ENCODE measurements at regions of chr6 and their contacts with region 1.

Region 1: DNA sequence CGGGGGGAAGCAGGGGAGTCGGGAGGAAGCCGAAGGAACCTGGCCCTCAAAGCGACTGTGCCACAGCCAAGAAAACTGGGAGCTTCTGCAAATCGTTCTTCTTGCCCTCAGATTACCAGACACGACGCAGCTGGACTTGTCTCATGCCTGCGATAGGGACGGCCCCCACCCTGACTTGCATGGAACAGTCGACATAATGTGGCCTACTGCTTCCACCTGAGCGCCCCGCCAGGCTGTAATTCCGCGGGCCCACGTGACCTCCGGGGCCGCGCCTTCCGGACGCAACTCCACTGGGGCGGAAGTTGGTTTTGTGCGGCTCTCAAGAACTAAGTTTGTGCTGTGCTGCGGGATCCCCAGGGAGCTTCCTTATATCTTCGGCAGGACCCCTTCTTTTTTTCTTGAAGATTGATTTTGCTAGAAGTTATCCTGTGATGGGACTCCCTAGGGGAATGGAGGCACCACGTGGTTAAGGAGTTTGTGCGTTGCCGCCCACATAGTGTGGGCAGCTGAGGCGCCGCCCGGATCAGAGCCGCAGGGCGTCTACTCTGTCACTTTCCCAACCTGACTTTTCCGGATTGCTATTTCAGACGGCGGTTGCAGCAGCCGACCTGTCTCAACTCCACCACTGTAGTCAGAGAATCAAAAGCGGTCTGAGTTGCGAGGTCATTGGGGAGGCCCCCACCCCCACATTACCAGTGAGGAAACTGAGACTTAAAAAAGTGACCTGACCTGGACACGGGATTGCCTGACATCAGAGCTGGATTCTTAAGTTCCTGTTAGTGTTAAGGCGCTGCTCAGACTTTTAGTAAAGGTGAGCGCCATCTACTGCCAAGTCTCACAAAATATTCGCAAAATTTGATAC is 540 bp upstream of the CD164 start:
- DNase-seq: peak; percentile 94
- H3K4me3 Mint-ChIP-seq: peak overlapping the region; percentile 88
- H3K27ac Mint-ChIP-seq: peak overlapping the region; percentile 100
- H3K4me1 Mint-ChIP-seq: peaks cover 34% of the 10 kb centered on the region
- H3K27me3 Mint-ChIP-seq: no peaks in the 10 kb centered on the region
- CTCF ChIP-seq: peak; percentile 31

Region 2: DNA sequence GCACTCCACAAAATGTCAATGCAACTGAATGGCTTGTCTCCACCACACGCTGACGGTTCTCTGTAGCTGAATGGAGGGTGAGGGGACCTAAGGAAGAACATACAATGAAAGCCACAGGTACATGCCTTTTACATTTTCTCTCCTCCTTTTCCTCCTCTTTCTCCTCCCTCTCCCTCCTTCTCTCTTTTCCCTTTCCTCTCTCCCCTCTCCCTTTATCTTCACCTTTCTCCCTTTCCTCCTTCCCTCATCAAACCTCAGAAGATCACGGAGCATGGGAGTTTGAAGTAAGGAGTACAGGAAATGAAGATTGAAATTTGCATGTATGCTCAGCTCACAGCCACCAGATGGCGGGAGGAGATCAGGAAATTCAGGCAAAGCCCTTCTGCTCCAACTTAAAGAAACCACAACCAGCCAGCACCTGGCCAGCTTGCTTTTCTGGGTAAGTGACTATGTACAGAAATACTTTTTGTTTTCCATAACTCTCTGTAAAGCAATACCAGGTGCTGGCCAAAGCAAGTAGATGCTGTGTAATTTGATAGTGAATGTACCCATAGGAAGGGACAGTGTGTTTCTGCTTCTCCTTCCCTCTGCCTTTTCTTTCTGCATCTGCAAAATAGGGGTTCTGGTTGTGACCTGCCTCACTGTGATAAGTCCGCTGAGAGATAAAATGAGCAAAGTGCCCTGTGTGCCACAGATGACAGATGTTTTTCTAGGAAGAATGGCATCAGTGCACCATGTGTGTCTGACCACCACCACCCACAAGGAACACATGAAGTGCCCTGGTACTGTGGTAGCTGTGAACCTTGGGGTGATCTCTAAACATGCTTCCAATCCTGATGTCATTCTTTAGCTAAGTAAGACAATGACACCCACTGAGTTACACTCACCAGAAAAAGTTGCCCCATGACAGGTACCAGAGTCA is 840.7 kb before region 1 on chr6:
- CTCF ChIA-PET with region 1: interaction called, 4 read pairs
- POLR2A ChIA-PET with region 1: no interaction called
- intact Hi-C with region 1: loop called (anchors 5 kb)
- DNase-seq: peak; percentile 81
- H3K4me3 Mint-ChIP-seq: no peak overlapping the region
- H3K27ac Mint-ChIP-seq: no peak overlapping the region
- H3K4me1 Mint-ChIP-seq: peaks cover 6% of the 10 kb centered on the region
- H3K27me3 Mint-ChIP-seq: no peaks in the 10 kb centered on the region
- CTCF ChIP-seq: peak; percentile 88

Region 3: GRCh38 chr6:109095027-109095834 is 287.6 kb before region 1 on chr6 and contains the start of gene CEP57L1:
- CTCF ChIA-PET with region 1: interaction called, 7 read pairs
- POLR2A ChIA-PET with region 1: interaction called, 94 read pairs
- intact Hi-C with region 1: loop called (anchors 1 kb)
- DNase-seq: peak; percentile 96
- H3K4me3 Mint-ChIP-seq: peak within 1 kb of the TSS; percentile 92
- H3K27ac Mint-ChIP-seq: peak within 1 kb of the TSS; percentile 98
- H3K4me1 Mint-ChIP-seq: peaks cover 36% of the 10 kb centered on the region
- H3K27me3 Mint-ChIP-seq: no peaks in the 10 kb centered on the region
- CTCF ChIP-seq: no peak
- total RNA-seq, gene CEP57L1: 16.7 and 18.9 TPM in 2 replicates

Region 4: GRCh38 chr6:109224116-109224875 is 158.5 kb before region 1 on chr6:
- CTCF ChIA-PET with region 1: no interaction called
- POLR2A ChIA-PET with region 1: no interaction called
- intact Hi-C with region 1: no loop called
- DNase-seq: no peak
- H3K4me3 Mint-ChIP-seq: no peak overlapping the region
- H3K27ac Mint-ChIP-seq: no peak overlapping the region
- H3K4me1 Mint-ChIP-seq: no peaks in the 10 kb centered on the region
- H3K27me3 Mint-ChIP-seq: no peaks in the 10 kb centered on the region
- CTCF ChIP-seq: no peak

Region 5: GRCh38 chr6:109349419-109350078 is 33.3 kb before region 1 on chr6:
- CTCF ChIA-PET with region 1: interaction called, 20 read pairs
- POLR2A ChIA-PET with region 1: interaction called, 27 read pairs
- intact Hi-C with region 1: no loop called
- DNase-seq: peak; percentile 58
- H3K4me3 Mint-ChIP-seq: no peak overlapping the region
- H3K27ac Mint-ChIP-seq: peak overlapping the region; percentile 42
- H3K4me1 Mint-ChIP-seq: peaks cover 36% of the 10 kb centered on the region
- H3K27me3 Mint-ChIP-seq: no peaks in the 10 kb centered on the region
- CTCF ChIP-seq: no peak

Region 6: GRCh38 chr6:109406196-109406595 is 23.4 kb after region 1 on chr6:
- CTCF ChIA-PET with region 1: interaction called, 9 read pairs
- POLR2A ChIA-PET with region 1: interaction called, 11 read pairs
- intact Hi-C with region 1: no loop called
- DNase-seq: peak; percentile 78
- H3K4me3 Mint-ChIP-seq: no peak overlapping the region
- H3K27ac Mint-ChIP-seq: no peak overlapping the region
- H3K4me1 Mint-ChIP-seq: peaks cover 6% of the 10 kb centered on the region
- H3K27me3 Mint-ChIP-seq: no peaks in the 10 kb centered on the region
- CTCF ChIP-seq: no peak

Region 7: DNA sequence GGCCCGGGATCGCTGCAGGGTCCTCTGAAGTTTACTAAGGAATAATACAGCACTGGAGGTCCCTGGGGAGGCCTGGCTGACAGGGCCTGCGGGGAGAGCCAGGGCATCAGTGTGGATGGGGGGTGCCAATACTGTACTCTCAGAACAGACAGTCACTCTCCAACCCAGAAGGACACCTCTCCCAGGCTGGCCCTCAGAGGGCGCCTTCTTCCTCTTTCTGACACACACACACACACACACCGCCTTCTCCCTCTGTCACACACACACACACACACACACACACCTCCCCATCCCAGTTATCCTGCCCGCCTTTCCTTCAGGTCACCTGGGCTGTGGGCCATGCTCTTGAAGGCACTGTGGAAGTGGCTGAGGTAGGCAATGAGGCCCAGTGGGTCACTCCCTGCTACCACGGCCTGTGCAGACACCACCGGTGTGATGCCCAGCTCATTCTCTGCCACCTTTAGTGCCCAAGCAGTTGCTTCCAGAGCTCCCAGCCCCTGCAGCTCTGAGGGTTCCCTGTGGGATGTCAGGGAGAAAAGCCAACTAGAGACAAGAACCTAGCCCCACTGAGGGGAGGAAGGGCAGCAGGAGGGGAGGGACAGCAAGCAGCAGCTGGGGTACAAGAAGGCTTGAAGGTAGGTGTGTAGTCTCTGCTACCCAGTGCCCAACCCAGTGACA is 65.2 kb after region 1 on chr6:
- CTCF ChIA-PET with region 1: interaction called, 5 read pairs
- POLR2A ChIA-PET with region 1: interaction called, 93 read pairs
- intact Hi-C with region 1: no loop called
- DNase-seq: no peak
- H3K4me3 Mint-ChIP-seq: no peak overlapping the region
- H3K27ac Mint-ChIP-seq: no peak overlapping the region
- H3K4me1 Mint-ChIP-seq: no peaks in the 10 kb centered on the region
- H3K27me3 Mint-ChIP-seq: no peaks in the 10 kb centered on the region
- CTCF ChIP-seq: no peak

Measured in MCF 10A (cell line).